H1 (cell line): ENCODE measurements at regions of chr20 and their contacts with region 1.

Region 1: GRCh38 chr20:44785769-44786168 is 24.6 kb downstream of the RIMS4 start:
- DNase-seq: peak; percentile 57 to 59
- H3K4me3 ChIP-seq: no peak overlapping the region
- H3K27ac ChIP-seq: no peak overlapping the region
- H3K4me1 ChIP-seq: peaks cover 12 to 19% (median 17%) of the 10 kb centered on the region in 4 experiments
- H3K27me3 ChIP-seq: no peaks in the 10 kb centered on the region
- CTCF ChIP-seq: peak; percentile 51 to 72 (median 65)
- EP300 ChIP-seq: no peak
- POLR2A ChIP-seq: no peak
- RAD21 ChIP-seq: peak; percentile 79 to 86

Region 2: GRCh38 chr20:44629542-44629941 is 156.2 kb before region 1 on chr20:
- CTCF ChIA-PET with region 1: no interaction called
- POLR2A ChIA-PET with region 1: no interaction called
- DNase-seq: no peak
- H3K4me3 ChIP-seq: no peak overlapping the region
- H3K27ac ChIP-seq: no peak overlapping the region
- H3K4me1 ChIP-seq: peaks cover 0 to 3% (median 0%) of the 10 kb centered on the region in 4 experiments; a peak in 3 of 7 replicates
- H3K27me3 ChIP-seq: no peaks in the 10 kb centered on the region
- CTCF ChIP-seq: no peak
- EP300 ChIP-seq: no peak
- POLR2A ChIP-seq: no peak
- RAD21 ChIP-seq: no peak

Region 3: DNA sequence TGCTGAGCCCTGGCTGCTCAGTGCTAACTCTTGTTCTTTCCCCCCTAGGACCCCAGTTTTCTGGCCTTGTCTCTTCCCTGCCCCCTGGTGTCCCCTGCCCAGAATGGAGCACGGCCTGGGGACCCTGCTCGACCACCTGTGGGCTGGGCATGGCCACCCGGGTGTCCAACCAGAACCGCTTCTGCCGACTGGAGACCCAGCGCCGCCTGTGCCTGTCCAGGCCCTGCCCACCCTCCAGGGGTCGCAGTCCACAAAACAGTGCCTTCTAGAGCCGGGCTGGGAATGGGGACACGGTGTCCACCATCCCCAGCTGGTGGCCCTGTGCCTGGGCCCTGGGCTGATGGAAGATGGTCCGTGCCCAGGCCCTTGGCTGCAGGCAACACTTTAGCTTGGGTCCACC is 58.7 kb before region 1 on chr20:
- CTCF ChIA-PET with region 1: no interaction called
- POLR2A ChIA-PET with region 1: no interaction called
- DNase-seq: no peak
- H3K4me3 ChIP-seq: no peak overlapping the region
- H3K27ac ChIP-seq: no peak overlapping the region
- H3K4me1 ChIP-seq: peaks cover 7 to 19% (median 14%) of the 10 kb centered on the region in 4 experiments
- H3K27me3 ChIP-seq: no peaks in the 10 kb centered on the region
- CTCF ChIP-seq: peak in 2 of 3 experiments; percentile 14 to 20; a peak in 2 of 4 replicates
- EP300 ChIP-seq: no peak
- POLR2A ChIP-seq: no peak
- RAD21 ChIP-seq: 0 out of 4 replicates have a peak, but pooled peaks of 1 of the 2 experiments have one; percentile 21

Region 4: GRCh38 chr20:44756011-44756688 is 29.6 kb before region 1 on chr20:
- CTCF ChIA-PET with region 1: interaction called, 21 read pairs
- POLR2A ChIA-PET with region 1: no interaction called
- DNase-seq: no peak
- H3K4me3 ChIP-seq: no peak overlapping the region
- H3K27ac ChIP-seq: no peak overlapping the region
- H3K4me1 ChIP-seq: peaks cover 0 to 10% (median under 1%) of the 10 kb centered on the region in 4 experiments; a peak in 1 of 7 replicates
- H3K27me3 ChIP-seq: no peaks in the 10 kb centered on the region
- CTCF ChIP-seq: peak in 2 of 3 experiments; percentile 19 to 34; a peak in 3 of 4 replicates
- EP300 ChIP-seq: no peak
- POLR2A ChIP-seq: no peak
- RAD21 ChIP-seq: no peak

Region 5: DNA sequence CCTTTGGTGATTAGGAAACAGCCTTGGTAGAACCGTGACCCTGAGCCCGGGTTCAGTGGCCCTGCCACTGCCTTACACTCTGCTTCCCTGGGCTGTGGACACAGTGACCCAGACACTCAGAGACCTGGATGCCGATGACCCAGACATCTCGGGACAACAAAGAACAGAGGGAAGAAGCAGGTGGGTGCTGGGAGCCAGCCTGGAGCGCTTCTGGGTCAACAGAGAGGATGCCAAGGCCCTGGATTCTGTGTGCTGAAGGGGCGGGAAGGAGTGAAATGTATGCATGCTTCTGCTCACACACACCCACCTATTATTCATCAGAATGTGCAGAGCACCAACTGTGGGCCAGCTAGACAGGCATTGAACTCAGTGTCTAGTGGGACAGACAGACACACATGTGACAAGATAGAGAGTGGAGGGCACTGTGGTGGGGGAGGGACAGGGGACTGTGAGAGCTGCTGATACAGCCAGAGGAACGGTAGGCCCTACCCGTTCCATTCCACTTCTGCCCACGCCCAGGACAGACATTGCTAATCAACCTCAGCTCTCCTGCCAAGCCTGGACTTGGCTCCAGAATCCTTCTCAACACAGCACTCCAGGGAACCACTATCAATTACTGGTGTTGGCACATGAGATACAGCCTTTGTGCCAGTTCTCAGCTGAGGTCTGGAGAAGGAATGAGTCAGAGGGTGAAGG is 20.0 kb before region 1 on chr20:
- CTCF ChIA-PET with region 1: interaction called, 16 read pairs
- POLR2A ChIA-PET with region 1: interaction called, 5 read pairs
- DNase-seq: no peak
- H3K4me3 ChIP-seq: no peak overlapping the region
- H3K27ac ChIP-seq: no peak overlapping the region
- H3K4me1 ChIP-seq: peaks cover 0 to 5% (median 0%) of the 10 kb centered on the region in 4 experiments; a peak in 3 of 7 replicates
- H3K27me3 ChIP-seq: no peaks in the 10 kb centered on the region
- CTCF ChIP-seq: no peak
- EP300 ChIP-seq: no peak
- POLR2A ChIP-seq: no peak
- RAD21 ChIP-seq: no peak

Region 6: GRCh38 chr20:44805979-44806620 is 20.3 kb after region 1 on chr20:
- CTCF ChIA-PET with region 1: interaction called, 170 read pairs
- POLR2A ChIA-PET with region 1: interaction called, 3 read pairs
- DNase-seq: peak in 1 of 2 experiments; percentile 82
- H3K4me3 ChIP-seq: no peak overlapping the region
- H3K27ac ChIP-seq: no peak overlapping the region
- H3K4me1 ChIP-seq: peaks cover 0 to 10% (median 5%) of the 10 kb centered on the region in 4 experiments; a peak in 6 of 7 replicates
- H3K27me3 ChIP-seq: peaks cover 0 to 16% (median 11%) of the 10 kb centered on the region in 4 experiments; a peak in 6 of 7 replicates
- CTCF ChIP-seq: no peak
- EP300 ChIP-seq: no peak
- POLR2A ChIP-seq: no peak
- RAD21 ChIP-seq: no peak

Region 7: DNA sequence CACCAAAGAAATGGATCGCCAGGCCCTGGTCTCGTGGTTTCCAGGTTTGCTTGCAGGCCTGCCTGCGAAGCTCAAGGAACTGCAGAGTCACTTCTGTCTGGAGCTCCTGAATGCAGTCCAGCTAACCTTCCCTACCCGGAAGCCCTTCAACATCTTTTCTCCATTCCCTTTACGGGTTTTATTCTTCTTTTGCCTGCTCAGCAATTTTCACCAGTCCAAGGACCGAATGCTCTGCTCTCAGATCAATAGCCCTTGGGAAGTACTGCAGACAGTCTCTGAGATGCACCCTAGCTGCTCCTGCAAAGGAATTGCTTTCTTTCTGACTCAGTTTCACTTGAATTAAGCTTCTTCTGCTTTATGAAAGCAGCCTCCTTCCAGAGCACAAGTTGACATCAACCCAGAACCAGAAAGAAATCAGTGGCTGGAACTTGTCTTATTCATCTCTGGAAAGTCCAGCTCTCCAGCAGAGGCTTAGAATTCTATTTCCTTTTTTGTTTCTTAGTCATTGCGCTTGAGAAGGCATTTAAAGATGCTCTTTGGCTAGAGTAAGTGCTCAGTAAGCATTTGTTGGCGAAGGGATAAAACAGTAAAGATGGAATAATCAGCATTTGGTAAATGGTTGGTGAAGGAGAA is 81.0 kb after region 1 on chr20:
- CTCF ChIA-PET with region 1: interaction called, 61 read pairs
- POLR2A ChIA-PET with region 1: no interaction called
- DNase-seq: no peak
- H3K4me3 ChIP-seq: no peak overlapping the region
- H3K27ac ChIP-seq: no peak overlapping the region
- H3K4me1 ChIP-seq: no peaks in the 10 kb centered on the region
- H3K27me3 ChIP-seq: no peaks in the 10 kb centered on the region
- CTCF ChIP-seq: no peak
- EP300 ChIP-seq: no peak
- POLR2A ChIP-seq: no peak
- RAD21 ChIP-seq: no peak